Activated CD8-positive, alpha-beta T cell treated with anti-CD3 and anti-CD28 coated beads for 36 hours (primary cell): ENCODE measurements at regions of chr1 and their contacts with region 1.

Region 1: GRCh38 chr1:180168786-180169639 is 14.3 kb downstream of the QSOX1 start:
- DNase-seq: peak; percentile 61
- ATAC-seq: peak; percentile 90
- H3K4me3 Mint-ChIP-seq: no peak overlapping the region
- H3K27ac Mint-ChIP-seq: no peak overlapping the region
- H3K4me1 Mint-ChIP-seq: peaks cover 2% of the 10 kb centered on the region
- H3K27me3 Mint-ChIP-seq: no peaks in the 10 kb centered on the region
- CTCF ChIP-seq: peak; percentile 62

Region 2: GRCh38 chr1:180154325-180155181 is 14.5 kb before region 1 on chr1 and contains the start of gene QSOX1:
- CTCF ChIA-PET with region 1: interaction called, 15 read pairs
- POLR2A ChIA-PET with region 1: interaction called, 28 read pairs
- intact Hi-C with region 1: no loop called
- DNase-seq: peak; percentile 90
- ATAC-seq: peak; percentile 97
- H3K4me3 Mint-ChIP-seq: peak within 1 kb of the TSS; percentile 90
- H3K27ac Mint-ChIP-seq: peak within 1 kb of the TSS; percentile 85
- H3K4me1 Mint-ChIP-seq: peaks cover 29% of the 10 kb centered on the region
- H3K27me3 Mint-ChIP-seq: no peaks in the 10 kb centered on the region
- CTCF ChIP-seq: no peak
- total RNA-seq, gene QSOX1: 32.2 to 33.9 TPM